Endothelial cell of umbilical vein (primary cell): ENCODE measurements at regions of chr1 and their contacts with region 1.

Region 1: DNA sequence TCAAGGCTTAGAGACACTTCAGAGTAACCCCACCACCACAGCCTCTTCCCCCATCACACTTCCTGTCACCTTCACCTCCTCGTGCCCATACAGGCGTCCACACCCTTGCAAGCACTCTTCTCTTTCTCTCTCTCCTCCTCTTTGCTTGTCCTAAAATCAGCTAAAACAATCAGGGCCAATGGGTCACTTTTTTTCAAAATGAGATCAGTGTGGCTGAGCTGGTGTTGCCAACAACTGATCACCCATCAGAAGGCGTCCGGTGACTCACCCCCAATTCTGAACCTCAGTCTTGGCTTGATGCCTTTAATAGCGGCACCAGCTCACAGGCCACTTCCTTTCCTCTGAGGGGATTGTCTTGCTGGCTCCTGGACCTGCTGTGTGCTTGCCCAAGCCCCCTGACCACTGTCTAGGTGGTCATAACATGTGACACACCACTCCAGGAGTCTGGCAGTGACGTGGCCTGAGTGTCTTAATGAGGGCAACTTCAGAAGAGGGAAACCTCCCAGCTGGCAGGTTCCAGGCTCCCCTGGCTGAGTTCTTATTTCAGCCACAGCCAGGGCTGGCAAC is 1.6 kb downstream of the DRAXIN start:
- DNase-seq: peak; percentile 87
- H3K4me3 ChIP-seq: no peak overlapping the region
- H3K27ac ChIP-seq: no peak overlapping the region
- H3K4me1 ChIP-seq: peaks cover 19% of the 10 kb centered on the region
- H3K27me3 ChIP-seq: peaks cover 25 to 32% of the 10 kb centered on the region in 2 experiments
- CTCF ChIP-seq: no peak
- POLR2A ChIP-seq: no peak

Region 2: DNA sequence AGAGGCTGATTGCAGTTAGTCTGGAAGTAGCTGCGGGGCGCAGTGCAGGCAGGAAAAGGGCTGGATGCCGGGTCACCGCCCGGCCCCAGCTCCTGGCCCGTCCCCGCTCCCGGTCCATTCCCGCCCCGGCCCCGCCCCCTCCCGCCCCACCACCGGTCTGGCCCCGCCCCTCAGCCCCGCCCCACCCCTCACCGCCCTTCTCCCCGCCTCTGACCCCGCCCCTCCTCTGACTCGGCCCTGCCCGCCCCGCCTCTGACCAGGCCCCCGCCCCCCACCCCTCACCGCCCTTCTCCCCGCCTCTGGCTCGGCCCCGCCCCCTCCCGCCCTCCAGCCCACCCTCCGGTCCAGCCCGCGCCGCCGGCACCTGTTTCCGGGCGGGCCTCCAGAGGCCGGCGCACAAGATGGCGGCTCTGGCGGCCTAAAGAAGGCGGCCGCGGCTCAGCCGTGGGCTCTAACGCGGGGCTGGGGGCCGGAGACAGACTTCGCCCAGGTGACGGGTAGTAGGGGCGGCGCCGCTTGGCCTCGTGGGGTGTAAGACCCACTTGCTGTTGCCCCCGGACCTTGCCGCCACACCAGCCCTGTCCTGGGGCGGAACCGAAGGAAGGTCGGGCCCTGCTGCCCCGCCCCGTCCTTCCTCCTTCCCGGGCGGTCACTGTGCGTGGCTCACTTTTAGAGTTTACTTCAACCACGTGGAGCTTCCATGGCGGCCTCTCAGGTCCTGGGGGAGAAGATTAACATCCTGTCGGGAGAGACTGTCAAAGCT is 420.1 kb before region 1 on chr1 and contains the start of gene UBIAD1:
- CTCF ChIA-PET with region 1: no interaction called
- POLR2A ChIA-PET with region 1: no interaction called
- dilution Hi-C with region 1: no loop called
- intact Hi-C with region 1: no loop called
- DNase-seq: peak; percentile 87
- H3K4me3 ChIP-seq: peak within 1 kb of the TSS; percentile 52 to 77 (median 66)
- H3K27ac ChIP-seq: peak within 1 kb of the TSS; percentile 93
- H3K4me1 ChIP-seq: peaks cover 13% of the 10 kb centered on the region
- H3K27me3 ChIP-seq: no peaks in the 10 kb centered on the region
- CTCF ChIP-seq: no peak
- POLR2A ChIP-seq: peak; percentile 80
- total RNA-seq, gene UBIAD1: 12.7 and 13.0 TPM in 2 replicates

Region 3: DNA sequence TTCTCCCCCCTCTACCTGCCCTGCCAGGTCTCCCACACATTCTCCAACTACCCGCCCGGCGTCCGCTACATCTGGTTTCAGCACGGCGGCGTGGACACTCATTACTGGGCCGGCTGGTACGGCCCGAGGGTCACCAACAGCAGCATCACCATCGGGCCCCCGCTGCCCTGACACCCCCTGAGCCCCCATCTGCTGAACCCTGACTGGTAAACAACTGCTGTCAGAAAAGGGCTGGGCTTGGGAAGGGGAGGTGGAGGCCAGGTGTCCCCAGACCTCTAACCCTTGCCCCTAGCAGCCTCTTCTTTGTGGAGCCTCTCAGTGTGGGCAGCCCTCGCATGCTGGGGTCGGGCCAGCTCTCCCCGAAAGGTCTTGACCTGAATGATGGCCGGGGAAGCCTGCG is 32.0 kb before region 1 on chr1:
- CTCF ChIA-PET with region 1: interaction called, 24 read pairs
- POLR2A ChIA-PET with region 1: no interaction called
- dilution Hi-C with region 1: no loop called
- intact Hi-C with region 1: loop called (anchors 1 kb)
- DNase-seq: no peak
- H3K4me3 ChIP-seq: no peak overlapping the region
- H3K27ac ChIP-seq: no peak overlapping the region
- H3K4me1 ChIP-seq: no peaks in the 10 kb centered on the region
- H3K27me3 ChIP-seq: no peaks in the 10 kb centered on the region
- CTCF ChIP-seq: no peak
- POLR2A ChIP-seq: no peak

Region 4: DNA sequence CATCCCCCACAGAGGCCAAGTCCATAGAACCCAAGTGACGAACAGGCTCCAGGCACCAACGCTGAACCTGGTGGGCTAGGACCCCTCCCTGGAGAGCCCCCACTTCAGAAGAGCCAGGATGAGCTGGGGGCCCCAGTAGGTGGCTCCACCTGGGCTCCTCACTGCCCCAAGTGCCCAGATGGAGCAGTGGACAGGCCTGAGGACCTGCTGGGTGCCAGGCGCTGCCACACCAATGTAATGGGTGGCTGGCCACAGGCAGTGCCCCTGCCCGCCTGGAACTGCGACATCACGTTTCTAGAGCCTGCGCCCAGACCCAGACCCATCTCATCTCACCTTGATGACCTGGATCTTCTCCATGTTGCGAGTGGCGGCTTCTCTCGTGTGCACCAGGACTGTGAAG is 17.8 kb before region 1 on chr1:
- CTCF ChIA-PET with region 1: no interaction called
- POLR2A ChIA-PET with region 1: no interaction called
- dilution Hi-C with region 1: no loop called
- intact Hi-C with region 1: no loop called
- DNase-seq: no peak
- H3K4me3 ChIP-seq: no peak overlapping the region
- H3K27ac ChIP-seq: no peak overlapping the region
- H3K4me1 ChIP-seq: peaks cover 2% of the 10 kb centered on the region
- H3K27me3 ChIP-seq: no peaks in the 10 kb centered on the region
- CTCF ChIP-seq: no peak
- POLR2A ChIP-seq: no peak

Region 5: DNA sequence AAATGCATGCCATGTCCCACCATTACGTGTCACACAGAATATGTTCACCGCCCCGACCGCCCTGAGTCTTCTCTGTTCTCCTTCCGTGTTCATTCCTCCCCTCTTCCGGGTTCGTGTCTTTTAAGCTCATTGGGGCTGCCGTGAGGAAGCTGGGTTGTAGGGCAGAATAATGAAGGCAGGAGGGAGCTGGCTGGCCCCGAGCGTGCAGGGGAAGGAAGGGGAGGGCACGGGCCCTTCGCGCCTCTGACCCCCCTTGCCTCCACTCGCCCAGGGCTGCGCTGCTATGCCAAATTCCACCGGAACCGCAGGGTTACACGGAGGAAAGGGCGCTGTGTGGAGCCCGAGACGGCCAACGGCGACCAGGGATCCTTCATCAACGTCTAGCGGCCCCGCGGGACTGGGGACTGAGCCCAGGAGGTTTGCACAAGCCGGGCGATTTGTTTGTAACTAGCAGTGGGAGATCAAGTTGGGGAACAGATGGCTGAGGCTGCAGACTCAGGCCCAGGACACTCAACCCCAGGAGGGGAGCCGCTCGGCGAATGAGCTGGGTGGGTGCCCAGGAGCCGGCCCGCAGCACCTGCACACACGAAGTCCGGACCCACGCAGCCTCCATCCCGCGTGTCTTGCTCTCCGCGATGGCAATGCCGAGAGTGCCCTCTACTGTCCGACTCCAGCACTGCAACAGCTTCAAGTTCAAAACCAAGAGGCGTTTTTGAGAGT is 26.4 kb after region 1 on chr1:
- CTCF ChIA-PET with region 1: interaction called, 11 read pairs
- POLR2A ChIA-PET with region 1: no interaction called
- dilution Hi-C with region 1: no loop called
- intact Hi-C with region 1: no loop called
- DNase-seq: peak; percentile 76
- H3K4me3 ChIP-seq: peak overlapping the region in 2 of 3 experiments; percentile 4 to 34
- H3K27ac ChIP-seq: no peak overlapping the region
- H3K4me1 ChIP-seq: peaks cover 4% of the 10 kb centered on the region
- H3K27me3 ChIP-seq: peaks cover 0 to 4% of the 10 kb centered on the region in 2 experiments
- CTCF ChIP-seq: peak; percentile 88 to 91
- POLR2A ChIP-seq: no peak